HEK293 (cell line): ENCODE measurements at regions of chr10 and their contacts with region 1.

Region 1: DNA sequence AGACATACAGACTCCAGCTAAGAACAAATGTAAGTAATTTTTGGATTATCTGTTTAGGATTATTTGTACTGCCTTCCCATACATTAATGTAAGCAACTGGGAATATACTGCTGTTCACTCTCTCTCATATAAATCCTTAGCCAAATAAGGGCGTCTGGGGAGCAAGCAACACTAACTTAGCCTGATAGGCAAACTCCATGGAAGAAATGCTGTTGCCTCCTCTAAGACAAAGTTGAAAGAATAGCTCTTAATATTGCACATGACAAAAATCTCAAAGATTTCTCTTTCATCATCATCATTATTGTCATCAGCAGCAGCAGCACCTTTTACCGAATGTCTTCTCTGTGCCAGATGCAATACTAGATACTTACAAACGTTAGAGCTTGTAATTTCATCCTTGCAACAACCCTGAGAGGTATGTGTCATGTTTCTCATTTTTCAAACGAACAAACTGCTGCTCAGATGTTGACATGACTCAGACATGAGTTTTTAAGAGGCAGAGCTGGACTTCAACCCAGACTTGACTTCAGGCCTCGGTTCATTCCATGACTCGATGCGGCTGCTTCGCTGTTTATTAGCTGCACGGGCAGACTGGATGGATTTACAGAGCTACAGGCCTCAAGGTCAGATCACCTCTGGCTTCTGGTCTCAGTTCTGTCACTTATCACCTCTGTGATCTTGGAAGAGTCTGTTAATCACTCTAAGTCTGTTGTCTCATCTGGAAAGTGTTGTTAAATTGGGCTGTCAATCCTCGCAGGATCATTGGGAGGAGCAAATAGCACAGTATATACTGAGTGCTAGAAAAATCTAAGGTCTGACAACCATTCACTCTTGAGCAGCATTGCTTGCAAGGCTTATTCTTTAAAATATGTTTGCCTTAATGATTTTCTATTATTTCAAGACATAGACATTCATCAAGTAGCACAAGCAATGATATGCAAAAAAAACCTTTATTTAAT is 126.3 kb upstream of the CELF2 start:
- H3K4me3 ChIP-seq: no peak overlapping the region
- H3K27ac ChIP-seq: no peak overlapping the region
- H3K4me1 ChIP-seq: no peaks in the 10 kb centered on the region
- CTCF ChIP-seq: no peak

Region 2: GRCh38 chr10:10869592-10869991 is 21.8 kb before region 1 on chr10:
- CTCF ChIA-PET with region 1: no interaction called
- POLR2A ChIA-PET with region 1: no interaction called
- H3K4me3 ChIP-seq: no peak overlapping the region
- H3K27ac ChIP-seq: no peak overlapping the region
- H3K4me1 ChIP-seq: peaks cover 17% of the 10 kb centered on the region
- CTCF ChIP-seq: no peak

Region 3: GRCh38 chr10:11086177-11086865 is 194.9 kb after region 1 on chr10:
- CTCF ChIA-PET with region 1: no interaction called
- POLR2A ChIA-PET with region 1: interaction called, 11 read pairs
- H3K4me3 ChIP-seq: no peak overlapping the region
- H3K27ac ChIP-seq: no peak overlapping the region
- H3K4me1 ChIP-seq: no peaks in the 10 kb centered on the region
- CTCF ChIP-seq: no peak